Cardiac septum (tissue), 1 donor: ENCODE measurements at regions of chr10 and their contacts with region 1.

Region 1: DNA sequence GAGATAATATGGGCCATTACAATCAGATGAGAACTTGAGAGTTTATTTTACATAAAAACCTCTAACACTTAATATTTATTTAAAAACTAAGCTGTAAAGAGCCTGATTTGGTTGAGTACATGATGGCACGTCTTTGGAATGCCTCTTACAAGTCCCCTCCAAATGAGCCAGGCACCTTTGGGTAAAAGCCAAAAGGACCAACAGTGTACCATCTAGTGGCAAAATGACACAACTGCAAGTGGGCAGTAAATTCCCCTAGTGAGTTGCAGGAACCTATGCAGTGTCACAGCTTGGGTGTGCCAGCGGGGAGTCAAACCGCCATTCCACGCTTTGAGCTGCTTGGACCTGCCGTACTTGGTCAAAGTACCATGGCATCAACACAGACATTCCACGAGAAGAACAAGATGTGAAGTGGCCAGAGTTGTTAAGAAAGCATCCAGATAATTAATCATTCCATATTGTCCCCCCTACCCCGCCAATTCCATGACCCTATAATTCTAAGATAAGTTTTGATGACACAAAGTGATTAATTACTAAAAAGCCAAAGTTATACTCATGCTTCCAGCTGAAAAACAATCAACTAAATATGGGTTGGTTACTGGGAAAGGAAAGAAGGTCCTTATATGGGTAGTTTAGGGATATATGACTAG is 115.2 kb downstream of the SORBS1 start:
- DNase-seq: no peak

Region 2: GRCh38 chr10:95406651-95407280 is 39.2 kb before region 1 on chr10:
- intact Hi-C with region 1: loop called (anchors 2 kb)
- DNase-seq: peak; percentile 91

Region 3: GRCh38 chr10:95480102-95480900 is 34.3 kb after region 1 on chr10:
- intact Hi-C with region 1: loop called (anchors 2 kb)
- DNase-seq: no peak